CD4-positive, alpha-beta T cell (primary cell): ENCODE measurements at regions of chr11 and their contacts with region 1.

Region 1: GRCh38 chr11:46936138-46937110 is at the start of gene CSTPP1:
- DNase-seq: peak; percentile 87 to 95 (median 92)
- ATAC-seq: peak; percentile 96
- H3K4me3 ChIP-seq: peak within 1 kb of the TSS; percentile 73
- H3K4me3 Mint-ChIP-seq: peak within 1 kb of the TSS; percentile 91
- H3K27ac ChIP-seq: peak within 1 kb of the TSS; percentile 28 to 39
- H3K27ac Mint-ChIP-seq: peak within 1 kb of the TSS; percentile 83
- H3K4me1 ChIP-seq: peaks cover 18% of the 10 kb centered on the region
- H3K4me1 Mint-ChIP-seq: peaks cover 22% of the 10 kb centered on the region
- H3K27me3 ChIP-seq: peaks cover 0 to 3% of the 10 kb centered on the region in 2 experiments
- H3K27me3 Mint-ChIP-seq: peaks cover 8% of the 10 kb centered on the region
- CTCF ChIP-seq: no peak
- total RNA-seq, gene CSTPP1: 6.6 to 7.3 TPM

Region 2: GRCh38 chr11:45846974-45847910 is 1089.2 kb before region 1 on chr11 and contains the start of gene CRY2:
- CTCF ChIA-PET with region 1: no interaction called
- POLR2A ChIA-PET with region 1: interaction called, 3 read pairs
- intact Hi-C with region 1: loop called in 1 of 2 experiments (anchors 5 kb)
- DNase-seq: peak; percentile 95 to 99 (median 98)
- ATAC-seq: peak; percentile 77
- H3K4me3 ChIP-seq: peak within 1 kb of the TSS; percentile 94
- H3K4me3 Mint-ChIP-seq: peak within 1 kb of the TSS; percentile 96
- H3K27ac ChIP-seq: peak within 1 kb of the TSS; percentile 91 to 93
- H3K27ac Mint-ChIP-seq: peak within 1 kb of the TSS; percentile 100
- H3K4me1 ChIP-seq: peaks cover 41% of the 10 kb centered on the region
- H3K4me1 Mint-ChIP-seq: peaks cover 70% of the 10 kb centered on the region
- H3K27me3 ChIP-seq: no peaks in the 10 kb centered on the region
- H3K27me3 Mint-ChIP-seq: no peaks in the 10 kb centered on the region
- CTCF ChIP-seq: no peak
- total RNA-seq, gene CRY2: 248 TPM

Region 3: GRCh38 chr11:47248664-47249377 is 312.4 kb after region 1 on chr11 and contains the start of gene ACP2:
- CTCF ChIA-PET with region 1: no interaction called
- POLR2A ChIA-PET with region 1: interaction called, 9 read pairs
- intact Hi-C with region 1: loop called (anchors 2 kb)
- DNase-seq: peak; percentile 78 to 93 (median 82)
- ATAC-seq: peak; percentile 97
- H3K4me3 ChIP-seq: peak within 1 kb of the TSS; percentile 77
- H3K4me3 Mint-ChIP-seq: peak within 1 kb of the TSS; percentile 94
- H3K27ac ChIP-seq: peak within 1 kb of the TSS; percentile 75 to 82
- H3K27ac Mint-ChIP-seq: peak within 1 kb of the TSS; percentile 93
- H3K4me1 ChIP-seq: peaks cover 28% of the 10 kb centered on the region
- H3K4me1 Mint-ChIP-seq: peaks cover 29% of the 10 kb centered on the region
- H3K27me3 ChIP-seq: no peaks in the 10 kb centered on the region
- H3K27me3 Mint-ChIP-seq: no peaks in the 10 kb centered on the region
- CTCF ChIP-seq: no peak
- total RNA-seq, gene ACP2: 16.8 to 17.2 TPM

Region 4: DNA sequence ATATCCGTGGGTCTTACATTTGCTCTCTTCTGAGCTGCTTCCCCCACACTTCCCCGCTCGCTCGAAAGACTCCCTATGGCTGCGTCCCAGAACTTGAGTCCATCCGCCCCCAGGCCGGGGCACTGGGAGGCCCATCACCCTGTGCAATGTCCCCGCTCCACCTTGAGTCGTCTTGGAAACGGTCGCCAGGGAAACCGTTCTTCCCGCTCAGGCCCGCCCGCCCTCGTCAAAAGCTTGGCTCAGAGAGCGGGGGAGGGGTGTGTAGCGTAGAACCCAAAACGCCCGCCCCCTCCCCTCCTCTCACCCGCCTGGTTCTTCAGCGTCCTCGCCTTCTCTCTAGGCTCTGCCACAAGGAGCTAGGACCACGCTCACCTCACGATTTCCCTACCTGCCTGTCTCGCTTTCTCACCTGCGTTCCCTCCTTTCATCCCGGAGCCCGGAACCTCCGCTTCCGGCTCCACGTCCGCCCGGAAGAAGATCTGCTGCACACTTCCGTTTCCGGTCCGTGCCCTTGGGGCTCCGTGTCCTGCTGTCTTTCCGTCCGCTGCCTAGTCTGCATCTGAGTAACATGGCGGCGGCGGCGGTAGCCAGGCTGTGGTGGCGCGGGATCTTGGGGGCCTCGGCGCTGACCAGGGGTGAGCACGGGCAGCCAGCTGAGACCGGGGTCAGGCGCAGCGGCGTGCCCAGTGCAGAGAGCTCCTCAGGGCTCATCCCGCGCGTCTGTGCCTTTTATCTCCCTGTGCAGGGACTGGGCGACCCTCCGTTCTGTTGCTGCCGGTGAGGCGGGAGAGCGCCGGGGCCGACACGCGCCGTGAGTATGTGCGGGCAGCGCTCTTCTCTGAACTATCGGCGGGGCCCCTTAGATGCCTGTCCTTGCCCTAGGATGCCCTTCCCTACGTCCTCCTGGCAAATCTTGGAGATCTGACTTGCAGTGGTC is 642.4 kb after region 1 on chr11 and contains the starts of genes KBTBD4 and NDUFS3:
- CTCF ChIA-PET with region 1: no interaction called
- POLR2A ChIA-PET with region 1: no interaction called
- intact Hi-C with region 1: loop called in 1 of 2 experiments (anchors 5 kb)
- DNase-seq: peak; percentile 81 to 95 (median 85)
- ATAC-seq: peak; percentile 91
- H3K4me3 ChIP-seq: peak within 1 kb of the TSS; percentile 90
- H3K4me3 Mint-ChIP-seq: peak within 1 kb of the TSS; percentile 99
- H3K27ac ChIP-seq: peak within 1 kb of the TSS; percentile 76 to 81
- H3K27ac Mint-ChIP-seq: peak within 1 kb of the TSS; percentile 91
- H3K4me1 ChIP-seq: peaks cover 38% of the 10 kb centered on the region
- H3K4me1 Mint-ChIP-seq: peaks cover 41% of the 10 kb centered on the region
- H3K27me3 ChIP-seq: no peaks in the 10 kb centered on the region
- H3K27me3 Mint-ChIP-seq: no peaks in the 10 kb centered on the region
- CTCF ChIP-seq: no peak
- total RNA-seq, gene KBTBD4: 29.1 to 30.2 TPM
- total RNA-seq, gene NDUFS3: 139 to 144 TPM